RWPE1 (cell line): ENCODE measurements at regions of chr5 and their contacts with region 1.

Region 1: GRCh38 chr5:151288180-151288579 is 15.4 kb downstream of the SLC36A3 start:
- DNase-seq: peak; percentile 83
- H3K27ac ChIP-seq: no peak overlapping the region
- CTCF ChIP-seq: no peak

Region 2: DNA sequence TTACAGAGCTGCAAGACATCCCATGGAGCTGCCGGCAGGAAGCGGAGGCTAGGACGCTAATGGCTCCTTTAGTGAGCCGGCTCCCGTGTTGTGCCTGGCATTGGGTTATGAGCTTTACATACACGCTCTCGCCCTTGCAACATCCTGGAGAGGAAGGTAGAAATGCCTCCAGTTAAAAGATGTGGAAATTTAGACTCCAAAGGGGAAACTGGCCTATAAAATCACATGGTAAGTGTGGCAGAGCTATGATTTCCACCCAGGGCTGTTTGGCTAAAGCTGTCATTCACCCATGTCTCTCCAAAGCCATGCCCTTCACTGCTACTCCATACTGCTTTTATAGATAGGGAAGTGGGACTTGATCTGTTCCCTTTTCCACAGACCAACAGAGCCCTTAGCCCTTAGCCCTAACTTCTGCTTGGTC is 30.0 kb before region 1 on chr5:
- CTCF ChIA-PET with region 1: interaction called, 10 read pairs
- POLR2A ChIA-PET with region 1: no interaction called
- DNase-seq: no peak
- H3K27ac ChIP-seq: peak overlapping the region; percentile 83
- CTCF ChIP-seq: no peak

Region 3: GRCh38 chr5:151424892-151425523 is 136.8 kb after region 1 on chr5:
- CTCF ChIA-PET with region 1: no interaction called
- POLR2A ChIA-PET with region 1: no interaction called
- DNase-seq: no peak
- H3K27ac ChIP-seq: no peak overlapping the region
- CTCF ChIP-seq: no peak